Brain microvascular endothelial cell (primary cell): ENCODE measurements at regions of chr2 and their contacts with region 1.

Region 1: GRCh38 chr2:142682528-142682927 is 194.9 kb upstream of the KYNU start:
- DNase-seq: peak; percentile 18
- H3K4me3 ChIP-seq: no peak overlapping the region
- H3K27ac ChIP-seq: no peak overlapping the region
- H3K27me3 ChIP-seq: no peaks in the 10 kb centered on the region
- CTCF ChIP-seq: peak; percentile 3

Region 2: GRCh38 chr2:142472382-142472781 is 210.1 kb before region 1 on chr2:
- in situ Hi-C with region 1: no loop called
- DNase-seq: no peak
- H3K4me3 ChIP-seq: no peak overlapping the region
- H3K27ac ChIP-seq: no peak overlapping the region
- H3K27me3 ChIP-seq: no peaks in the 10 kb centered on the region
- CTCF ChIP-seq: no peak

Region 3: GRCh38 chr2:142989273-142990204 is 307.0 kb after region 1 on chr2:
- in situ Hi-C with region 1: loop called (anchors 25 kb)
- DNase-seq: no peak
- H3K4me3 ChIP-seq: no peak overlapping the region
- H3K27ac ChIP-seq: no peak overlapping the region
- H3K27me3 ChIP-seq: no peaks in the 10 kb centered on the region
- CTCF ChIP-seq: no peak